Endothelial cell of umbilical vein (primary cell): ENCODE measurements at regions of chr16 and their contacts with region 1.

Region 1: DNA sequence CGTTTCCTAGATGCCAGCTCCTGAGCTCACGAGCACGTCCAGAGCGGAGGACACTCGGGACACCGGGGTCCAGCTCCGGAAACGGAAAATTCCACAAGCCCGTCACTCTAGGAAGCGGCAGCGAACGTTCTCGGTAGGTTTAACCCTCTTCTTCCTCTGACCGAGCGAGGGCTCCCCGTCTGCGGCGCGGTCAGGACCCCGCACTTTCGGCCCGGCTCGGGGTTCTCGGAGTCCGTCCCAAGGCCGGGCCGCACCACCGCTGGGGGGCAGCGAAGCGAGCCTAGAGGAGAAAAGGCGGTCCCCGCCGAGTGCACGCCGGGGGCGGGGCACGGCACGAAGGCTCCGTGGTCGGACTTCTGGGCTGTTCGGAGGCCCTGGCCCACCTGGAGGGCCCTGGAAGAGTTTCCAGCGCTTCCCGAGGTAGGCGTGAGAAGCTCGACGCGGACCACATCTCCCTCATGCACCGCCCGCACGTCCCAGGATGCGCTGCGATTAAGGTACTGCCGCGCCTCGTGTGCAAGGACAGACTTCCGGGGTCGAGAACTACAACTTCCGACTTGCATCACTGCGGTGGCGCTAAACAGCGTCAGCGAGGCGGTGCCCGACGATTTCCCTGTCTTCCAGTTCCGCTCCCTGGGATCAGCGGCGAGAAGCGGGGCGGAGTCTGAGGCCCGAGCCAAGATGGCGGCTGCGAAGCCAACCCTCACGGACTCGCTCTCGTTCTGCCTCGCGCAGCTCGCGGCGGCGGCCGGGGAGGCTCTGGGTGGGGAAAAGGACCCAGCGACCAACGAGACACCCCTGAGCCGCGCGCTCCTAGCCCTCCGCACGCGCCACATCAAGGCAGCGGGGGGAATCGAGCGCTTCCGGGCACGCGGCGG is at the start of gene ARMC5:
- DNase-seq: peak; percentile 96
- H3K4me3 ChIP-seq: peak within 1 kb of the TSS; percentile 41 to 81 (median 71)
- H3K27ac ChIP-seq: peak within 1 kb of the TSS; percentile 96
- H3K4me1 ChIP-seq: peaks cover 23% of the 10 kb centered on the region
- H3K27me3 ChIP-seq: no peaks in the 10 kb centered on the region
- CTCF ChIP-seq: peak; percentile 47 to 70
- POLR2A ChIP-seq: peak; percentile 38
- total RNA-seq, gene ARMC5: 17.3 and 17.9 TPM in 2 replicates

Region 2: DNA sequence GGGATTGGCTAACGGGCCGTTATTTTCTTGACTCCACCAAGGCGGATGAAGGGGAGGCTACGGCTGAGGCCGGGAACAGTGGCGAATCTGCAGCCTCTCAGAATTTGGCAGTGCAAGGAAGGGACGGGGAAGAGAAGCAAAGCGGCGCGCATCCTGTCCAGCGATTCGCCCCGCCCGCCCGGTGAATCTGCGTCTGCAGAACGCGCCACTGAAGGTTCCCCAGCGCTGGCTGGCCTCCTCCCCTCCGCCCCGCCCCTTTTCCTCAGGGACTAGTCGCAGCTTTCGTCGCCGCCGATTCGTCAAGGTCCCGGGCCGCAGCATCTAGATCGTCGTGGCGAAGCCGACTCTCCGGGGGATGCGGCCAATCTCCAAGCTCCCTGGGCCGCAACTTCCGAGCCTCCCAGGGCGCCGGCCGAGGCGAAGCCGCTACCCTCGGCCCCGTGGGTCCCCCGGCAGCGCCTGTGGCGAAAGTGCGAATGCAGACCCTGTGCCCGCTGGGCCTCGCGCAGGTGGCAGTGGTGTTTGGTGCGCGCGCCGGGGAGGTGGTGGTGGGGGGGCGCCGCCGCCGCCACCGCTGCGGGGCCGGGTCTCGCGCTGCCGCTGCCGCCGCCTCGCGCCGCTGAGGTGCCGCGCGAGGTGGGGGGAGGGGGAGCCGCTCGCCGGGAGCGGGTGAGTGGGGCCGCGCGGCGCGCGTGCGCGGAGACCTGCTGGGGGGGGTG is 501.5 kb before region 1 on chr16 and contains the start of gene SETD1A:
- CTCF ChIA-PET with region 1: interaction called, 12 read pairs
- POLR2A ChIA-PET with region 1: no interaction called
- dilution Hi-C with region 1: no loop called
- intact Hi-C with region 1: no loop called
- DNase-seq: peak; percentile 90
- H3K4me3 ChIP-seq: peak within 1 kb of the TSS; percentile 60 to 71 (median 67)
- H3K27ac ChIP-seq: peak within 1 kb of the TSS; percentile 100
- H3K4me1 ChIP-seq: peaks cover 12% of the 10 kb centered on the region
- H3K27me3 ChIP-seq: no peaks in the 10 kb centered on the region
- CTCF ChIP-seq: no peak
- POLR2A ChIP-seq: no peak
- total RNA-seq, gene SETD1A: 21.3 and 25.6 TPM in 2 replicates

Region 3: GRCh38 chr16:31073968-31074813 is 384.9 kb before region 1 on chr16 and contains the starts of genes ZNF646 and ZNF668:
- CTCF ChIA-PET with region 1: no interaction called
- POLR2A ChIA-PET with region 1: no interaction called
- dilution Hi-C with region 1: no loop called
- intact Hi-C with region 1: loop called (anchors 2 kb)
- DNase-seq: peak; percentile 99
- H3K4me3 ChIP-seq: peak within 1 kb of the TSS; percentile 68 to 87 (median 87)
- H3K27ac ChIP-seq: peak within 1 kb of the TSS; percentile 86
- H3K4me1 ChIP-seq: peaks cover 14% of the 10 kb centered on the region
- H3K27me3 ChIP-seq: no peaks in the 10 kb centered on the region
- CTCF ChIP-seq: no peak
- POLR2A ChIP-seq: peak; percentile 84
- total RNA-seq, gene ZNF646: 13.1 and 15.9 TPM in 2 replicates
- total RNA-seq, gene ZNF668: 11.6 and 13.3 TPM in 2 replicates

Region 4: DNA sequence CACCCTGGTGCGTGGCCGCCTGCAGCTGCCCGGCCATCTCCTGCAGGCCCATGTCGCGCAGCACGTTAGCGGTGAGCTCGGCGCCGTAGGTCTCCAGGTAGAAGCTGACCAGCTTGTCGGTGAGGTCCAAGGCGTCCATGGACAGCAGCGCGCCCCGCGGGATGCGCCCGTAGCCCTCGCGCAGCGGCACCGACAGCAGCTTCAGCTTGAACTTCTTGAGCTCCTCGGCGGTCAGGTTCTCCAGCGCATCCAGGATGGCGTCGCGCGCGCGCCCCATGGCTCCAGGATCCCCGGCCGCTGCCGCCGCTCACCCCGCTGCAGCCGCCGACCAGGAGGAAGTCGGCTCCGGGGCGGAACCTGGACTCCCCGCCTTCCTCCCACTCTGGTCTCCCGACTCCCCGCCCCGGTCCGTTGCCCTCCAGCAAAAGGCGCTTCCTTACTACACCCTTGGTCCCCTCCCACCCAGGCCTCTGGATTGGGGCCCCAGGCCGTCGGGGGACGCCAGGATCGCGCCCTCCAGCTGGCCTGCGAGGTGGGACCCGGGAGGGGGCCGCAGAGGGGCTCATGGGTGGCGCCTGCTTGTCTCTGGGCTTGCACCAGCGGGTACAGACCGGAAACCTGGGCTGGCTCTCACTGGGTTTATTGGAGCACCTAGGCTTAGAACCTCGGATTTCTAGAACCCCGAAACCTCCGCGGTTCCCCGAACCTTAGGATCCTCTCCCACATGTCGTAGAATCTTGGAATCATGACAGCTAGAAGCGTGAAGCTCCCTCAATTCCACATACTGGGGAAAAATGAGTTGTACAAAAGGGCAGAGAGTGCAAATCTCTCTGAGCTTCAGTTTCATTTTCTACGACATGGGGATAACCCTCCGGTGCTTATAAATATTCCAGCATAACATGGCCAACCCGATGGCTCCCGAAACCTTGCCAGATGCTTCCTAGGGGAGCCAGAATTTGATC is 256.4 kb before region 1 on chr16 and contains the start of gene PYCARD:
- CTCF ChIA-PET with region 1: interaction called, 4 read pairs
- POLR2A ChIA-PET with region 1: no interaction called
- dilution Hi-C with region 1: no loop called
- intact Hi-C with region 1: loop called (anchors 5 kb)
- DNase-seq: peak; percentile 36
- H3K4me3 ChIP-seq: peak within 1 kb of the TSS; percentile 26 to 62 (median 36)
- H3K27ac ChIP-seq: no peak within 1 kb of the TSS
- H3K4me1 ChIP-seq: peaks cover 4% of the 10 kb centered on the region
- H3K27me3 ChIP-seq: peaks cover 2 to 6% of the 10 kb centered on the region in 2 experiments
- CTCF ChIP-seq: no peak
- POLR2A ChIP-seq: no peak
- total RNA-seq, gene PYCARD: 19.1 and 23.0 TPM in 2 replicates

Region 5: DNA sequence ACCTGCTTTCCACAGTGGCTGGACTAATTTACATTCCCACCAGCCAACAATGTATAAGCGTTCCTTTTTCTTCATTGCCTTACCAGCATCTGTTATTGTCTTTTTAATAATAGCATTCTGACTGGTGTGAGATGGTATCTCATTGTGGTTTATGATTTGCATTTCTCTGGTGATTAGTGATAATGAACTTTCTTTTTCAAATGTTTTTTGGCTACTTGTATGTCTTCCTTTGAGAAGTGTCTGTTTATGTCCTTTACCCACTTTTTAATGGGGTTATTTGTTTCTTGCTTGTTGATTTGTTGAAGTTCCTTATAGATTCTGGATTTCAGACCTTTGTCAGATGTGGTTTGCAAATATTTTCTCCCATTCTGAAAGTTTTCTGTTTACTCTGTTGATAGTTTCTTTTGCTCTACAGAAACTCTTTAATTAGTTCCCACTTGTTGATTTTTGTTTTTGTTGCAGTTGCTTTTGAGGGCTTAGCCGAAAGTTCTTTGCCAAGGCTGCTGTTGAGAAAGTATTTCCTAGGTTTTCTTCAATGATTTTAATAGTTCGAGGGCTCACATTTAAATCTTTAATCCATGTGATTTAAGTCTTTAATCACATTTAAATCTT is 172.6 kb before region 1 on chr16:
- CTCF ChIA-PET with region 1: no interaction called
- POLR2A ChIA-PET with region 1: no interaction called
- dilution Hi-C with region 1: no loop called
- intact Hi-C with region 1: no loop called
- DNase-seq: no peak
- H3K4me3 ChIP-seq: no peak overlapping the region
- H3K27ac ChIP-seq: no peak overlapping the region
- H3K4me1 ChIP-seq: no peaks in the 10 kb centered on the region
- H3K27me3 ChIP-seq: no peaks in the 10 kb centered on the region
- CTCF ChIP-seq: no peak
- POLR2A ChIP-seq: no peak

Region 6: GRCh38 chr16:31472709-31473203 is 13.7 kb after region 1 on chr16:
- CTCF ChIA-PET with region 1: interaction called, 53 read pairs
- POLR2A ChIA-PET with region 1: interaction called, 6 read pairs
- dilution Hi-C with region 1: no loop called
- intact Hi-C with region 1: loop called (anchors 1 kb)
- DNase-seq: peak; percentile 81
- H3K4me3 ChIP-seq: peak overlapping the region; percentile 19 to 82 (median 71)
- H3K27ac ChIP-seq: peak overlapping the region; percentile 49
- H3K4me1 ChIP-seq: peaks cover 14% of the 10 kb centered on the region
- H3K27me3 ChIP-seq: no peaks in the 10 kb centered on the region
- CTCF ChIP-seq: peak; percentile 68 to 72
- POLR2A ChIP-seq: peak; percentile 58

Region 7: DNA sequence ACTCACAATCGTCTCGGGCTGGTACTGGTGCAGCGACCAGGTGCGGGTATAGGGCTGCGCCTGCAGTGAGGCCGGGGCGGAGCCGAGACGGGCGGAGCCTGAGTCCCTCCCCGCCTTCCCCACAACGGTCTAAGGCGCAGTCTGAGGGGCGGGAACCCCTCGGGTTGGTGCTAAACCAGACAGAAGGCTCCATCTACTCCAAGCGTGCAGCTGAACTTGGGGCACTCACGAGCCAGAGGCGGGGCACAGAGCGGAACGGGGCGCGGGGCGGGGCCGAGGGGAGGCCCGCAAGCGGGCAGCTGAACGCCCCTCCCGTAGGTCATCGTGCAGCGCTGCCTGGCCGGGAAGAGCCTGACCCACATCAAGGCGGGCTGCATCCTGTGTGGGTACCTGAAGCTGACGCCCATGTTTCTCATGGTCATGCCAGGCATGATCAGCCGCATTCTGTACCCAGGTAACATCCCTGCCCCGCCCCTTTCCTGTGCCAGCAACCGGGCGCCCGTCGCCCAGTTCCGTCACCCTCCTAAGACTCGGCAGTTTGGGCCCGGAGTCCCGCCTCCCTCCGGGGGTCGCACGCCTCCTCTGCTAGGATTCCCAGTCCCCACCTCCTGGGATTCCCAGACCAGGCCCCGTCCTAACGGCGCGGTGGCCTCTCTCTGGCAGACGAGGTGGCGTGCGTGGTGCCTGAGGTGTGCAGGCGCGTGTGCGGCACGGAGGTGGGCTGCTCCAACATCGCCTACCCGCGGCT is 28.8 kb after region 1 on chr16:
- CTCF ChIA-PET with region 1: interaction called, 10 read pairs
- POLR2A ChIA-PET with region 1: no interaction called
- dilution Hi-C with region 1: no loop called
- intact Hi-C with region 1: no loop called
- DNase-seq: peak; percentile 21
- H3K4me3 ChIP-seq: peak overlapping the region in 1 of 3 experiments; percentile 35
- H3K27ac ChIP-seq: no peak overlapping the region
- H3K4me1 ChIP-seq: peaks cover 11% of the 10 kb centered on the region
- H3K27me3 ChIP-seq: peaks cover 3 to 24% of the 10 kb centered on the region in 2 experiments
- CTCF ChIP-seq: no peak
- POLR2A ChIP-seq: no peak

Region 8: GRCh38 chr16:31700526-31701388 is 241.7 kb after region 1 on chr16:
- CTCF ChIA-PET with region 1: interaction called, 3 read pairs
- POLR2A ChIA-PET with region 1: no interaction called
- dilution Hi-C with region 1: no loop called
- intact Hi-C with region 1: loop called (anchors 2 kb)
- DNase-seq: no peak
- H3K4me3 ChIP-seq: peak overlapping the region in 2 of 3 experiments; percentile 1 to 33
- H3K27ac ChIP-seq: no peak overlapping the region
- H3K4me1 ChIP-seq: no peaks in the 10 kb centered on the region
- H3K27me3 ChIP-seq: peaks cover 11% of the 10 kb centered on the region in 2 experiments
- CTCF ChIP-seq: no peak
- POLR2A ChIP-seq: no peak